Left colon (tissue), 2 donors: ENCODE measurements at regions of chr16 and their contacts with region 1.

Region 1: DNA sequence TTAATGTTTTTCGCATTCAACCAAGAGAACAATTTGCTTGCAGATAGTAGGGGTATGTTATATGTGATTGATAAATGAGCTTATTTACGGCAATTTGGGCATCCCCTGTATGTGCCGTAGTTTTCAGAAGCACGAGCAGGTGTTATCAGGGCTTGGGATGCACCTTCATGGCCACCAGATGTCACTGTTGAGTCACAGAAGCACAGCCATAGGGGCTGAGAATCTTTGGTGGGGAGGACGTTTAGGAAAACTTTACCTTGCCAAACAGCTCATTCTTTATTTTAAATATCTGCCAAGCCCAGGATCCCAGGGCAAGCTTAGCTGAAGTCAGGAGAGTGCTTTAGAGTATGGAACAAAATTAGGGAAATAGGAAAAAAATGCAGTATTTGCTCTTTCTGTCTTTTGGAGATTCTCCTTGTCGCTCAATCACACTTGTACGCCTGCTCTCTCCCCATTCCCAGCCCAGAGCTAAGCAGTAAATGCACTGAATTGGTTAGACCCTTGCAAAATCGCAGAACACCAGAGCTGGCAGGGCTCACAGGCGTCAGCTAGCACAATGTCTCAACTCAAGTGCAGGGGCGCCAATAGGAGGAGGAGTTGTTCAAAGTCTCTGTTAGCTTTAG is 93.6 kb upstream of the MPHOSPH6 start:
- DNase-seq: peak; percentile 28 to 58
- ATAC-seq: peak; percentile 76

Region 2: GRCh38 chr16:82156761-82157532 is 106.7 kb before region 1 on chr16:
- intact Hi-C with region 1: no loop called
- DNase-seq: no peak
- ATAC-seq: no peak

Region 3: GRCh38 chr16:82456683-82457082 is 193.1 kb after region 1 on chr16:
- intact Hi-C with region 1: loop called in 1 of 2 experiments (anchors 10 kb)
- DNase-seq: peak in 1 of 2 donors; percentile 59
- ATAC-seq: peak; percentile 97